Activated naive CD4-positive, alpha-beta T cell treated with anti-CD3 and anti-CD28 coated beads for 36 hours (primary cell): ENCODE measurements at regions of chr11 and their contacts with region 1.

Region 1: DNA sequence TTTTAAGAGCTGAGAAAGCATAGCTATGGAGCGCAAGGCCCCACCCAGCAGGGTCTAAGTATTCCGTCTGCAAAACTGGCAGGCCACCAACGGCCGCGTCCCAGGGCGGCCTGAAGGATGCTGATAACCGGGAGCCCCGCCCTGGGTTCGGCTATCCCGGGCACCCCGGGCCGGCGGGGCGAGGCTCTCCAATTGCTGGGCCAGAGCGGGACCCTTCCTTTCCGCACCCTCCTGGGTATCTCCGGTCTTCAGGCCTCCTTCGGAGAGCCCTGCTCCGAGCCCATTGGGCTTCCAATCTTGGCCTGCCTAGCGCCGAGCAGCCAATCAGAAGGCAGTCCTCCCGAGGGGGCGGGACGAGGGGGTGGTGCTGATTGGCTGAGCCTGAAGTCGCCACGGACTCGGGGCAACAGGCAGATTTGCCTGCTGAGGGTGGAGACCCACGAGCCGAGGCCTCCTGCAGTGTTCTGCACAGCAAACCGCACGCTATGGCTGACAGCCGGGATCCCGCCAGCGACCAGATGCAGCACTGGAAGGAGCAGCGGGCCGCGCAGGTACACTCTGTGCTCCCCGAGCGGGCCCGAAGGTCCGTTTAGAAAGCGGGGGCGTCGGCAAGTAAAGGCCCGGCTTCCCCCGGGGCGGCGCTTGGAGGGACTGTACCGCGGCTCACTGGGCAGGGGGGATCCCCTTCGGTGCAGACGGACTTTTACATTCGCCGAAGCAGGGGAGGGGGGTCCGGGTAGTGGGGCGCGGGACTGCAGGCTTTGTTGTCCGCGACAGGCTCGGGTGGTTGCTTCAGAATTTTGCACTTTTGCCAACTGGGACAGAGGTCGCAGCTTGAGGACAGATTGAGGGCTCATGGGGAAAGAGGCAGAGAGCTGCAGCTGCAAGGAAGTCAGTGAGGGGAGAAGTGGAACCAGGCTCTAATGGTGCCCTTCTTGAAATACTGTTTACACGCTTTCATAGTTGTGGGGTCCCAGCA is at the start of gene CAT:
- DNase-seq: peak; percentile 99
- H3K4me3 Mint-ChIP-seq: peak within 1 kb of the TSS; percentile 89
- H3K27ac Mint-ChIP-seq: peak within 1 kb of the TSS; percentile 85
- H3K4me1 Mint-ChIP-seq: peaks cover 29% of the 10 kb centered on the region
- H3K27me3 Mint-ChIP-seq: no peaks in the 10 kb centered on the region
- total RNA-seq, gene CAT: 28.3 to 29.1 TPM

Region 2: GRCh38 chr11:33736148-33736809 is 702.5 kb before region 1 on chr11 and contains the start of gene CD59:
- CTCF ChIA-PET with region 1: no interaction called
- intact Hi-C with region 1: loop called (anchors 5 kb)
- DNase-seq: peak; percentile 95
- H3K4me3 Mint-ChIP-seq: peak within 1 kb of the TSS; percentile 78
- H3K27ac Mint-ChIP-seq: peak within 1 kb of the TSS; percentile 61
- H3K4me1 Mint-ChIP-seq: peaks cover 33% of the 10 kb centered on the region
- H3K27me3 Mint-ChIP-seq: no peaks in the 10 kb centered on the region
- total RNA-seq, gene CD59: 59.9 to 61.9 TPM

Region 3: DNA sequence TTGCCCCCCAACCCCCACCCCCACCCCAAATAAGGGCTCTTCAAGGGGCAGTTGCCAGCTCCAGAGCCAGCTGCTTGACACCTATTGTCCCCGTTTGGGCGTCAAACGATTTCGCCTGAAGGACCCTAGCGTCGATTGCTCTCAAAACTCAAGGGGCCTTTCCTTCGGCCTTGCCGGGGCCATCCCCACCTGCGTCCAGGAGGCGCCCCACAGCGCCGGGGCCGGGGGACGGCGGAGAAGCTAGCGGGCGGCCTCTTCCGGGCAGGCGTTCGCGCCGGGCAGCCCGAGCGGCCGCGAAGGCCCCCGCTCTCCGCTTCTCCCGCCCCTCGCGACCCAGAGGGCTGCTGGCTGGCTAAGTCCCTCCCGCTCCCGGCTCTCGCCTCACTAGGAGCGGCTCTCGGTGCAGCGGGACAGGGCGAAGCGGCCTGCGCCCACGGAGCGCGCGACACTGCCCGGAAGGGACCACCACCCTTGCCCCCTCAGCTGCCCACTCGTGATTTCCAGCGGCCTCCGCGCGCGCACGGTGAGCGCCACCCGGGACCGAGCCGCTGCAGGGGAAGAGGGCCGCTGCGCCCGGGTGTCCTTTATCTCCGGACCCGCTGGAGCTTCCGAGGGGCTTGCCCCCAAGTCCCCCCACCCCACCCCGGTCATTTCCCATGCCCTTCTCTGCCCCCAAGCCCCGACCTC is 387.3 kb before region 1 on chr11 and contains the start of gene CAPRIN1:
- CTCF ChIA-PET with region 1: no interaction called
- intact Hi-C with region 1: loop called (anchors 1 kb)
- DNase-seq: peak; percentile 86
- H3K4me3 Mint-ChIP-seq: peak within 1 kb of the TSS; percentile 96
- H3K27ac Mint-ChIP-seq: peak within 1 kb of the TSS; percentile 97
- H3K4me1 Mint-ChIP-seq: peaks cover 14% of the 10 kb centered on the region
- H3K27me3 Mint-ChIP-seq: no peaks in the 10 kb centered on the region
- total RNA-seq, gene CAPRIN1: 274 to 289 TPM

Region 4: DNA sequence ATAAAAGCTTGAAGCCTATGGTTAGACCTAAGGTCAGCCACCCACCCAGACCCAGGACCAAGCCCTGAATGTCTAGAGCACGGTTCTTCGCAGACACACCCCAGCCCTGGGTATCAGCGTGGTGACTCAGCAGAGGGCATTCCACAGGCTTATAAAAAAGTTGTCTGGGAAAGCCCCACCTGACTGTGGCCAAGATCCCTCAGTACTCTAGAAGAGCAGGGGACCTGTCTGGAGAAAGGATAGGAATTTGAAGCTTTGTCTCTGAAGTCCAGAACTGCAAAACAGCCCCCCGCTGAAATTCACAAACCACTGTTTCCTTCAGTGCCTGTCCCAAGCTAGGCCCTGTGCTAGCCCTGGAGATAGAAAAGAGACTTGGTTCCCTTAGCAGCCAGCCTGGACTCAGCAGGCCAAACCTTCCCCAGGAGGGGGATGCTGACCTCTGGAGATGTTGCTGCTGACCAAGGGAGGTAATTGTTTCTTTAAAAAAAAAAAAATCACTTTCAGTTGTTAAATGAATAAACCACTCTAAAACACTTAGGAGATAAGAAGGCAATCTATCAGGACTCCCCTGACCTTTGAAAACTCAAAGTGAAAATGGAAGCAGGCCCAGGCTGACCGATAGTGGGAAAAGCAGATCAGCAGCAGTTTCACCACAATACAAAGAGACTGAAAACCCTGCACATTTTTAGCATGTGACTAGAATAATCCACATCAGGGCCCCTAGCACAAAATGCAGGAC is 194.9 kb before region 1 on chr11:
- CTCF ChIA-PET with region 1: no interaction called
- intact Hi-C with region 1: loop called (anchors 5 kb)
- DNase-seq: peak; percentile 77
- H3K4me3 Mint-ChIP-seq: no peak overlapping the region
- H3K27ac Mint-ChIP-seq: peak overlapping the region; percentile 46
- H3K4me1 Mint-ChIP-seq: peaks cover 78% of the 10 kb centered on the region
- H3K27me3 Mint-ChIP-seq: peaks cover 2% of the 10 kb centered on the region

Region 5: GRCh38 chr11:34405079-34405858 is 33.5 kb before region 1 on chr11:
- CTCF ChIA-PET with region 1: interaction called, 4 read pairs
- intact Hi-C with region 1: loop called (anchors 1 kb)
- DNase-seq: peak; percentile 28
- H3K4me3 Mint-ChIP-seq: no peak overlapping the region
- H3K27ac Mint-ChIP-seq: no peak overlapping the region
- H3K4me1 Mint-ChIP-seq: peaks cover 16% of the 10 kb centered on the region
- H3K27me3 Mint-ChIP-seq: peaks cover 9% of the 10 kb centered on the region

Region 6: GRCh38 chr11:34492806-34493414 is 54.1 kb after region 1 on chr11:
- CTCF ChIA-PET with region 1: no interaction called
- intact Hi-C with region 1: loop called (anchors 2 kb)
- DNase-seq: peak; percentile 73
- H3K4me3 Mint-ChIP-seq: no peak overlapping the region
- H3K27ac Mint-ChIP-seq: no peak overlapping the region
- H3K4me1 Mint-ChIP-seq: no peaks in the 10 kb centered on the region
- H3K27me3 Mint-ChIP-seq: no peaks in the 10 kb centered on the region